GM23248 (cell line): ENCODE measurements at regions of chr10 and their contacts with region 1.

Region 1: GRCh38 chr10:58291538-58292174 is 22.7 kb downstream of the CISD1 start:
- DNase-seq: peak; percentile 79
- H3K4me3 ChIP-seq: no peak overlapping the region
- H3K27ac ChIP-seq: no peak overlapping the region
- H3K4me1 ChIP-seq: no peaks in the 10 kb centered on the region
- H3K27me3 ChIP-seq: no peaks in the 10 kb centered on the region

Region 2: DNA sequence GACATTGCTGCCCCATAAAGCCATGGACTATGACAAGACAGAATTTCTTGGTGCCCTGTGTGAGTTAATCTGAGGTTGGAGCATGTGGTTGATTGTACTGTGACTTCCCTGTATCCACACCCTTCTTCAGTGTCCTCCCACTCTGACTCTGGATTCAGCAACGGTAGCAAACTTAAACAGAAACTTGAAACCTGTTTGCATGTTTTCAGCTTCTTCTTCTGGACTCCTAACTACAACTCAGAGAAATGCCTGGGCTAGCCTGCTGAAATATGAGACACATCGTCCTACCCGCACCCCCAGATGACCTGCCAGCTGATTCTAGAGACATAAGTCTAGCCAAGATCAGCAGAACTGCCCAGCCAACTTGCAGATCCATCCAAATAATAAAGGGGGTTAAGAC is 102.4 kb before region 1 on chr10:
- in situ Hi-C with region 1: loop called (anchors 5 kb)
- DNase-seq: peak; percentile 23
- H3K4me3 ChIP-seq: no peak overlapping the region
- H3K27ac ChIP-seq: no peak overlapping the region
- H3K4me1 ChIP-seq: 0 out of 2 replicates have a peak, but pooled peaks cover 8% of the 10 kb centered on the region
- H3K27me3 ChIP-seq: no peaks in the 10 kb centered on the region

Region 3: DNA sequence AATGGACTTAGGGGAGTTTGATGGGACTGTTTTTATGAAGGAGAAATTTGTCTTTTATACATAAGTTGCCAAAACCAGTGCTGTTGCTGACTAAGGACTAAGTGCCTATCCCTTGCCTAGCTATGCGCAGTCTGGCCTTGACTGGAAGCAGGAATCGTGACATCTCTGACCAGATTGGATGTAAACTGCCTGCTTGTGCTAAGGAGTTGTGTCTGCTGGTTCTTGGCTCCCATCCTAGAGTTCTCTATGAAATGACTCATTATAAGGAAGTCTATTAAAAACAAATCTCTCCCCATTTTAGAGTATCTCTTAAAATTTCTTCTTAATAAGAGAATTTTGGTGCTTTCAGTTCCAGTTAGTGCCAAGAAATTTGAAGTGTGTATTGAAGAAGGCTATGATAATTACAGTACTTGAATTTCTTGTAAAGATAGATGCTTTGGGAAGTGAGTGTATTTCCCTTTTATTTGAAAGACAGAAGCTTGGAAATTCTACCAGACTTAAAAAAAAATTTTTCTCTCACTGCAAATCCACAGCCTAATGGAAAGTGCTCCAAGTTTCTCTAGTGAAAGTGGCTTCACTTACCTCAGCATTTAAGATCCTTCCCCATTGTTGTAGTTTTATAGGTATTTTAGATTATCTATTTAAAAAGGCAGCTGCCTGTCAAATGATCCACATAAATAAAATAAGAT is 298.6 kb after region 1 on chr10:
- in situ Hi-C with region 1: no loop called
- DNase-seq: peak; percentile 97
- H3K4me3 ChIP-seq: peak overlapping the region; percentile 27
- H3K27ac ChIP-seq: peak overlapping the region; percentile 51
- H3K4me1 ChIP-seq: peaks cover 37% of the 10 kb centered on the region
- H3K27me3 ChIP-seq: no peaks in the 10 kb centered on the region

Region 4: DNA sequence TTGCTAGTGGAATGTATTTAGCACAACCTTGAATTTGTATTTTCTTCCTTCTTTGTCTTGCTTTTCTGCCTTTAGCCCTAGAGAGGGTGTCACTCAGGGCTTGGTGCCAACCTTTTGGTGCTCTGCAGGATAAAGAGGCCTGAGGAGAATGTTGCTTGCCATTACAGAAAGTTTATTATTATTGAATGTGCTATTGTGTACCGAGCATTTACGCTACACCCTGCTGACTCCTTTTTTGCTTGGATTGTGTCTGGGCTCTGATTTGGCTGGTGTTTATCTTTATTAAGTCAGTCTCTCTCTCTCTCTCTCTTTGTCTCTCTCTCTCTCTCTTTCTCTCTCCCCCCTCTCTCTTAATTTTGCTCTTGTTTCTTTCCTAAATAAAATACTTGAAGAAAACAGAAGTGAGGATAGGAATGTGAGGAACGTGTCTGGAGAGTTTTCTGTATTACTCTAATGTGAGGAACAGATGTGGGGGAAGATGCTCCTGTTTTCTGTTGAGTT is 600.4 kb after region 1 on chr10:
- in situ Hi-C with region 1: no loop called
- DNase-seq: peak; percentile 34
- H3K4me3 ChIP-seq: no peak overlapping the region
- H3K27ac ChIP-seq: no peak overlapping the region
- H3K4me1 ChIP-seq: peaks cover 9% of the 10 kb centered on the region
- H3K27me3 ChIP-seq: no peaks in the 10 kb centered on the region